Caco-2 (cell line): ENCODE measurements at regions of chr1 and their contacts with region 1.

Region 1: DNA sequence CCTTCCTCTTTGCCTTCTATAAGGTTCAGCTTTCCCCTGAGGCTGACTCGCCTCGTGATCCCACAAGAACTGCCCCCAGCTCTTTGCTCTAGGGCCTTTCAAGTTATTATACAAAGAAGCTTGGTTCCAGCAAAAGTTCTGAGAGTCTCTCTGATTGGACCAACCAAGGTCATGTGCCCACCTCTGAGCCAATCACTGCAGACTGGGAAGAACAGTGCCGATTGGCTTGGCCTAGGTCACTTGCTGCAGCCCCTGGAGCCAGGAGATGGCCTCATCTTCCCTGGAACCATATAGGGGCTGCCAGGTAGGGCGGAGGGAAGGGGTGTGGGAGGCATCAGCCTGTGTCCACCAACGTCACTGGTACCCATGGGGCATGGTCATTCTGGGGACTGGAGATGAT is 22.8 kb downstream of the TAS1R2 start:
- DNase-seq: no peak
- H3K4me3 ChIP-seq: no peak overlapping the region
- H3K4me3 Mint-ChIP-seq: no peak overlapping the region
- H3K27ac Mint-ChIP-seq: no peak overlapping the region
- H3K4me1 ChIP-seq: no peaks in the 10 kb centered on the region
- H3K4me1 Mint-ChIP-seq: no peaks in the 10 kb centered on the region
- H3K27me3 ChIP-seq: no peaks in the 10 kb centered on the region
- H3K27me3 Mint-ChIP-seq: peaks cover 5% of the 10 kb centered on the region
- CTCF ChIP-seq: no peak

Region 2: DNA sequence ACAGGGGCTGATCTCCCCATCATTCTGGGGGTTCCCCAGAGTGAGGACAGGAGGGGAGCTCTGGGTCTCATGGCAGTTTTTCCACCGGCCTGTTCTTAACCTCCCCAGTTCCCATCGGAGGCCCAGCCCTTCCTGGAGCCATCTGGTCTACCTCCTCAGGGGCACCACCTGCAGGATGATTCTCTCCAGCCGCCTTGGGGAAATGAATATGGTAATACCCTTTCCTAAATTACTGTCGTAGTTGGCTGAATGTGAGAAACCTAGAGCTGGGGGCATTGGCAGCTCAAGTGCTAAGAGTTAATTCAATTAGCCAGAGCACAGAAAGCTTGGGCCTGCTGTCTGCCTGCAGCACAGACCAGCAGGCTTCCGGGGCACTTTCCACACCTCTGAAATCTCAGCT is 42.1 kb before region 1 on chr1:
- CTCF ChIA-PET with region 1: no interaction called
- POLR2A ChIA-PET with region 1: no interaction called
- intact Hi-C with region 1: no loop called
- DNase-seq: peak in 1 of 2 experiments; percentile 34
- H3K4me3 ChIP-seq: no peak overlapping the region
- H3K4me3 Mint-ChIP-seq: no peak overlapping the region
- H3K27ac Mint-ChIP-seq: no peak overlapping the region
- H3K4me1 ChIP-seq: no peaks in the 10 kb centered on the region
- H3K4me1 Mint-ChIP-seq: no peaks in the 10 kb centered on the region
- H3K27me3 ChIP-seq: no peaks in the 10 kb centered on the region; the same call in 1 of the 2 replicates
- H3K27me3 Mint-ChIP-seq: peaks cover 20% of the 10 kb centered on the region
- CTCF ChIP-seq: peak in 1 of 2 experiments; percentile 21

Region 3: GRCh38 chr1:18866314-18866713 is 29.7 kb after region 1 on chr1:
- CTCF ChIA-PET with region 1: interaction called, 12 read pairs
- POLR2A ChIA-PET with region 1: no interaction called
- intact Hi-C with region 1: no loop called
- DNase-seq: no peak
- H3K4me3 ChIP-seq: no peak overlapping the region
- H3K4me3 Mint-ChIP-seq: no peak overlapping the region
- H3K27ac Mint-ChIP-seq: no peak overlapping the region
- H3K4me1 ChIP-seq: no peaks in the 10 kb centered on the region
- H3K4me1 Mint-ChIP-seq: no peaks in the 10 kb centered on the region
- H3K27me3 ChIP-seq: no peaks in the 10 kb centered on the region
- H3K27me3 Mint-ChIP-seq: peaks cover 4% of the 10 kb centered on the region
- CTCF ChIP-seq: no peak